A673 (cell line): ENCODE measurements at regions of chr7 and their contacts with region 1.

Region 1: GRCh38 chr7:13742811-13743210 is 246.7 kb downstream of the ETV1 start:
- DNase-seq: peak; percentile 68
- H3K4me3 ChIP-seq: no peak overlapping the region
- H3K27ac ChIP-seq: no peak overlapping the region
- H3K4me1 ChIP-seq: no peaks in the 10 kb centered on the region
- H3K27me3 ChIP-seq: no peaks in the 10 kb centered on the region
- CTCF ChIP-seq: peak; percentile 71

Region 2: DNA sequence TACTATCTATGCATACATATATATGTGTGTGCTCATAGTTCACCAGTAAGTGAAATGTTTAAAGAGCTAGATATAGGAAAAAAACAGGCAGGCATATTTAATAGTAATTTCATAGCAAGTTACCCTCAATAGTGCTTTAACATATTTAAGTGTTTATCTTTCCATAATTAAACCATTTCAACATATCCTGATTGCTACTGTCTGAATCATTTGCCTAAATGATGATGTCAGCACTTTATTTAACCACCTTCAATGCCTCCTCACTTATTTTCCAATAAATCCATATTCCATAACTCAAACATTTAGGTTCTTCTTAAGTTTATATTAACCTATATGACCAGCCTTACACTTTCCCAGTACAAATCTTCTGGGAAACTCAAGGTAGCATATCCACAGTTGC is 454.3 kb before region 1 on chr7:
- CTCF ChIA-PET with region 1: interaction called, 4 read pairs
- POLR2A ChIA-PET with region 1: no interaction called
- intact Hi-C with region 1: loop called (anchors 5 kb)
- DNase-seq: no peak
- H3K4me3 ChIP-seq: no peak overlapping the region
- H3K27ac ChIP-seq: no peak overlapping the region
- H3K4me1 ChIP-seq: peaks cover 7% of the 10 kb centered on the region
- H3K27me3 ChIP-seq: no peaks in the 10 kb centered on the region
- CTCF ChIP-seq: no peak

Region 3: DNA sequence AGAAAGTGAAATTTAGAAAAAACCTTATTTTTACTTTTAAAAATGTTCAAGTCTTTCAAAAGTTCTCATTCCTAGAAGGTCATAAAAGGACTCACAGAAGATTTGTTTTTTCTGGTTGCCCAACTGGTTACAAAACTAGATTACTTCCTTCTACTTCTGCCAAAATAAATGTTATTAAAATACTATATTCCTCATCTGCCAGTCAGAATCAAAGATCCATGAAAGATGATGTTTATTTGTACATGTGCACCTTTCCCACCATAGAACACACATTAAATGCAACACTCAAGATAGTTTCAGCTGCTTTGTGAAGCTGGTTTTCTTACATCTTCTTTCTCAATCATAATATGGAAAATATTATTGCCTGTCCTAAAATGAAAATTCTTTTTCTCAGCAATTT is 218.7 kb before region 1 on chr7:
- CTCF ChIA-PET with region 1: no interaction called
- POLR2A ChIA-PET with region 1: no interaction called
- intact Hi-C with region 1: loop called (anchors 2 kb)
- DNase-seq: no peak
- H3K4me3 ChIP-seq: no peak overlapping the region
- H3K27ac ChIP-seq: no peak overlapping the region
- H3K4me1 ChIP-seq: peaks cover 4% of the 10 kb centered on the region
- H3K27me3 ChIP-seq: no peaks in the 10 kb centered on the region
- CTCF ChIP-seq: no peak